PC-9 (cell line): ENCODE measurements at regions of chr15 and their contacts with region 1.

Region 1: GRCh38 chr15:83837945-83838571 is 184.1 kb downstream of the ADAMTSL3 start:
- DNase-seq: peak in 1 of 2 experiments; percentile 14
- H3K4me3 ChIP-seq: no peak overlapping the region
- H3K27ac ChIP-seq: no peak overlapping the region
- H3K4me1 ChIP-seq: no peaks in the 10 kb centered on the region
- H3K27me3 ChIP-seq: no peaks in the 10 kb centered on the region
- CTCF ChIP-seq: peak; percentile 65

Region 2: DNA sequence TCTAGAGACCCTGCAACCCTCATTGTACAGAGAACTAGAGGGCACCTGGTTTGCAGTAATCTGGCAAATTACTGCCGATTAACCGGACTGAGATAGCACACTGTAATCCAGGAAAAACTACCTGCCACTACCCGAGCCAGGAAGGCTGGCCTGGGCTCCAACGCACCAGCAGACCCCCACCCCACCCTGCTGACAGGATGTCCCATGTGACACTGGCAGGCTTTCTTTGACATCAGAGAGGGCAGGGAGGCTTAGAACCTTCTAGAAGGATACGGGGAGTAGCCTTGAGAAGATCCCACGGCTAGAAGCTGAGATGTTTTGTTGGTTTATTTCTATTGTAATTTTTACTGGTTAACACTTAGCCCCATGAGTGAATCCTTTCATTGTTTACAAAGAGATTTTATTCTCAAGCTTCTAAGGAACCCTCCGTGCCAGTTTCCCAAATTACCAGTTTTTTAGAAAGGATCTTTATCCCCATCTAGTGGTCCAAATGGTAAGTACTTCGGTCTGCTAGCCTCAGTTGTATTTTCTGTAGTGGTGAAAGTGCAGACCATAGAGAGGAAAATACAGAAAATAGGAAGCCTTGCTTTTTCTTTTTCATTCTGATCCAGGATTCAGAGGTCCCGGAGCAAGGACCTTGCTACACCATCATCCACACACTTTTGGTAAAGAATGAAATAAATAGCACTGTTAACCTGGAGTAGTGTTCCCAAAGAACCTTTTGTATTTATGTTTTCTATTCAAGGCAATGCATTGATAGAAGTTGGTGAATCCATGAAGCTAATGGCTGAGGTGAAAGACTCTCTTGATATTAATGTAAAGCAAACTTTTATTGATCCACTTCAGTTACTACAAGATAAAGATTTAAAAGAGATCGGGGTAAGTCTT is 266.0 kb before region 1 on chr15:
- CTCF ChIA-PET with region 1: no interaction called
- POLR2A ChIA-PET with region 1: no interaction called
- intact Hi-C with region 1: loop called (anchors 5 kb)
- DNase-seq: no peak
- H3K4me3 ChIP-seq: no peak overlapping the region
- H3K27ac ChIP-seq: no peak overlapping the region
- H3K4me1 ChIP-seq: no peaks in the 10 kb centered on the region
- H3K27me3 ChIP-seq: no peaks in the 10 kb centered on the region
- CTCF ChIP-seq: peak; percentile 75